ENCODE measurements at regions of chr17 and their contacts with region 1.

Region 1: DNA sequence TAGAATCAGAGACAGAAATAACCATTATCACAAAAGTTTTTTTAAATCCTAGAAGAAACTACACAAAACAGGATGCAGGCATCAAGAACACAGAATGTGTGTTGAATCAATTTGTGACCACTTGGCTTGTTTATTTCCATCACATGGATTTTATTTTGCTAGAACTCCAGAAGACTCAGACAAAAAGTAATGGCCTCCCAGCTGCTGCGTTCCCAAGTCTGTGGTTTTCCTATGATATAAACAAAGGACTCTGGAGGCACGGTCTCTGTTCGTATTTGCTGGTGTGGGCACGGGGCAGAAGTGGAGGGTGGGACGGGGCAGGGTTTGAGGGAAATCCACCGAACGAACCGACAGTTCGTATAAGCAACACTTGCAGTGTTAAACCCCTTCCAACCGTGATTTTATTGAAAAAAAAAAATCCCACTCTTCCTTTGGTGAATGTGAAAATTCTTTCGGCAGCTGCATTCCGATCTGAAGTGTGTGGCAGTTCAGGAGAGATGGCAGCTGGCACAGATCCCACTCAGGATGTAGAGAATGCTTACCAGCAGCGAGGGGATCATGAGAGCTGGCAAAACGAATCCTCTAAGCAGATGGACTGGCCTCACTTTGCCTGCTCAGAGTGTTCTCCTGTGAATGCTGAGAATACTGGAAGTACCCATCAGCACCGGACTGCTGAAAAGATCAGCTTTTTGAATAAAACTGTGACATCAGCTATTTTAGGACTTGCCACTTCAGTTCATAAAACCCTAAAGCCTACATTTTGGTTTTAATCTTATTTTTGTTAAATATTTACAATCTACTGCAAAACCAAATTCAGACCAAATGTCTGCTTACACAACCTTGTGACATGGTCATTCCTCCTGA is 165.2 kb downstream of the VPS53 start:
- DNase-seq: no peak
- H3K4me3 Mint-ChIP-seq: no peak overlapping the region
- H3K27ac Mint-ChIP-seq: no peak overlapping the region
- H3K4me1 Mint-ChIP-seq: peaks cover 38% of the 10 kb centered on the region
- H3K27me3 Mint-ChIP-seq: no peaks in the 10 kb centered on the region

Region 2: DNA sequence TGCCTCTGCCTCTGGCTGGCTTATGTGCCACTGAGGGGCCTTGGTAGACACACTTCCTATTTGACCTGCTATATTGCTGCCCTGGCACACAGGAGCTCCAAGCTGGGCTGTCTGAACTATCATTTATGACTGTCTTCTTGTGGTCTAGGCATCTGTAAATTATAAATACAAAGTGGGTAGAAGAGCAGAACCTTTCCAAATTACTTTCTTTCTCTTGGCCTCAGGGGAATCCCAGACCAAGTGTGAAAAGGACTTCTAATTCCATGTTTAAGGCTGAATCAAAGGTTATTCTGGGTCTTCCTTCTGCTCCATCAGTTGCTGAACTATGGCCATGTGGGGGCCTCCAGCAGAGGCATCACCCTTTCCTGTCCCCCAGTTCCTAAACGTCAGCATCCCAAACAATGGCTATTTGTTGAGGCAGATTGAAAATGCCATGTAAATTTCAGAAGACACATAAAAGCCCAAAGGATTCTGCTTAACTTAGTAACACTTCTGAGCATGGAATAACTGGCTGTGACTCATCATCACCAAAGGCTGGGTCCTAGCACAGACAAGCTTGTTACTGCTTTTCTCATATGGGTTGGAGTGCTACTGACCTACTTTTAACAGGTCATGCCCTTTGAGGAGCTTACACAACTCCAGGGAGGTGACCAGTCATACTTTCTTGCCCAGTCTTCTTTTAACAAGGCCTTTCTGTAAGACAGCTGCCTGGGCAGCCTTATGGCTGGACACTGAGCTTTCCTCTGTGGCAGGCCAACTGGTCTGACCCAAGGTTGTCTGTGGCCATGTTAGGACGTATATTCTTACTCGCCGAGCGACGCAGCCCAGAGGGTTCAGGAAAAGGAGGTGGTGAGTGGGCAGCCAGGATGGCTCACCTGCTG is 10.4 kb after region 1 on chr17:
- intact Hi-C with region 1: loop called (anchors 2 kb)
- DNase-seq: no peak
- H3K4me3 Mint-ChIP-seq: no peak overlapping the region
- H3K27ac Mint-ChIP-seq: peak overlapping the region; percentile 67
- H3K4me1 Mint-ChIP-seq: peaks cover 21% of the 10 kb centered on the region
- H3K27me3 Mint-ChIP-seq: no peaks in the 10 kb centered on the region

Measured in activated T-helper 2 cell treated with anti-CD3 and anti-CD28 coated beads, Interferon-gamma antibody, Interleukin-2, Interleukin-4, amounts not matched to agents 10 μg/mL and 5 μg/mL and 100 μg/mL, durations not matched to agents 14 hours and 24 hours and 36 hours (primary cell).